CD14-positive monocyte (primary cell): ENCODE measurements at regions of chr1 and their contacts with region 1.

Region 1: GRCh38 chr1:203290261-203291089 is 14.8 kb upstream of the BTG2 start:
- DNase-seq: peak; percentile 93 to 97 (median 97)
- H3K4me3 ChIP-seq: peak overlapping the region in 2 of 3 experiments; percentile 14 to 47
- H3K4me3 Mint-ChIP-seq: peak overlapping the region; percentile 69 to 84
- H3K27ac ChIP-seq: peak overlapping the region; percentile 92 to 99
- H3K27ac Mint-ChIP-seq: peak overlapping the region; percentile 99 to 100 (median 100)
- H3K4me1 ChIP-seq: peaks cover 61 to 66% of the 10 kb centered on the region in 2 donors
- H3K4me1 Mint-ChIP-seq: peaks cover 64% of the 10 kb centered on the region
- H3K27me3 ChIP-seq: no peaks in the 10 kb centered on the region
- H3K27me3 Mint-ChIP-seq: peaks cover 0 to 2% (median 0%) of the 10 kb centered on the region in 3 donors
- CTCF ChIP-seq: no peak

Region 2: GRCh38 chr1:203304919-203305808 is 14.7 kb after region 1 on chr1 and contains the start of gene BTG2:
- intact Hi-C with region 1: loop called in 1 of 2 experiments (anchors 1 kb)
- DNase-seq: peak; percentile 92 to 96 (median 93)
- H3K4me3 ChIP-seq: peak within 1 kb of the TSS; percentile 81 to 99 (median 97)
- H3K4me3 Mint-ChIP-seq: peak within 1 kb of the TSS; percentile 93 to 100
- H3K27ac ChIP-seq: peak within 1 kb of the TSS; percentile 98 to 100
- H3K27ac Mint-ChIP-seq: peak within 1 kb of the TSS; percentile 97 to 99 (median 98)
- H3K4me1 ChIP-seq: peaks cover 54 to 68% of the 10 kb centered on the region in 2 donors
- H3K4me1 Mint-ChIP-seq: peaks cover 69% of the 10 kb centered on the region
- H3K27me3 ChIP-seq: no peaks in the 10 kb centered on the region
- H3K27me3 Mint-ChIP-seq: peaks cover 0 to 3% (median 2%) of the 10 kb centered on the region in 3 donors
- CTCF ChIP-seq: no peak
- polyA plus RNA-seq, gene BTG2: 293 to 539 (median 483) TPM

Region 3: GRCh38 chr1:203326830-203327683 is 36.6 kb after region 1 on chr1:
- intact Hi-C with region 1: loop called in 1 of 2 experiments (anchors 5 kb)
- DNase-seq: peak; percentile 83 to 90 (median 88)
- H3K4me3 ChIP-seq: peak overlapping the region; percentile 39 to 74 (median 53)
- H3K4me3 Mint-ChIP-seq: peak overlapping the region; percentile 69 to 86
- H3K27ac ChIP-seq: peak overlapping the region; percentile 93 to 94
- H3K27ac Mint-ChIP-seq: peak overlapping the region; percentile 94 to 98 (median 95)
- H3K4me1 ChIP-seq: peaks cover 61 to 70% of the 10 kb centered on the region in 2 donors
- H3K4me1 Mint-ChIP-seq: peaks cover 62% of the 10 kb centered on the region
- H3K27me3 ChIP-seq: no peaks in the 10 kb centered on the region
- H3K27me3 Mint-ChIP-seq: peaks cover 0 to 6% (median 0%) of the 10 kb centered on the region in 3 donors
- CTCF ChIP-seq: no peak